ENCODE measurements at regions of chr9 and their contacts with region 1.

Region 1: GRCh38 chr9:5886114-5886939 is 4.4 kb upstream of the MLANA start:
- DNase-seq: peak; percentile 79 to 94
- H3K4me3 ChIP-seq: no peak overlapping the region
- H3K27ac ChIP-seq: no peak overlapping the region
- H3K4me1 ChIP-seq: no peaks in the 10 kb centered on the region
- H3K27me3 ChIP-seq: no peaks in the 10 kb centered on the region
- CTCF ChIP-seq: peak; percentile 95 to 98 (median 98)
- EP300 ChIP-seq: no peak
- POLR2A ChIP-seq: no peak
- RAD21 ChIP-seq: peak; percentile 96 to 97

Region 2: DNA sequence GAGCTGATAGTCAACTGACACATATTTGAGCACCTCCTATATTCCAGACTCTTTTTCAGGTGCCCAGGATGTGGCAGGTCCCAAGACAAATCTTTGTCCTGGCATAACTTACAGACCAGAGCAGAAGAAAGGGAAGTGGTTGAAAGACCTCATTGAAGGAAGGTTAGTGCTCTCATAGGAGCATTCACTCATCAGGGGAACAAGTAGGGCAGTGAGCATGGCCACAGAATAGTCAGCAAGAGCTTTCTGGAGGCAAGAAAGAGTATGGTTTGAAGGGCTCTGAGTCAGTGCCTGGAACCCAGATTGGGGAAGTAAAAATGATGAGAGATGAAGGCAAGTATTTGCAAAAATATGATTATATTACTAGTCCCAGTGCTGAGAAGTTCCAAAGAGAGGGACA is 28.4 kb before region 1 on chr9:
- CTCF ChIA-PET with region 1: interaction called, 26 read pairs
- POLR2A ChIA-PET with region 1: no interaction called
- DNase-seq: no peak
- H3K4me3 ChIP-seq: no peak overlapping the region
- H3K27ac ChIP-seq: no peak overlapping the region
- H3K4me1 ChIP-seq: no peaks in the 10 kb centered on the region
- H3K27me3 ChIP-seq: no peaks in the 10 kb centered on the region
- CTCF ChIP-seq: no peak
- EP300 ChIP-seq: no peak
- POLR2A ChIP-seq: no peak
- RAD21 ChIP-seq: no peak

Region 3: DNA sequence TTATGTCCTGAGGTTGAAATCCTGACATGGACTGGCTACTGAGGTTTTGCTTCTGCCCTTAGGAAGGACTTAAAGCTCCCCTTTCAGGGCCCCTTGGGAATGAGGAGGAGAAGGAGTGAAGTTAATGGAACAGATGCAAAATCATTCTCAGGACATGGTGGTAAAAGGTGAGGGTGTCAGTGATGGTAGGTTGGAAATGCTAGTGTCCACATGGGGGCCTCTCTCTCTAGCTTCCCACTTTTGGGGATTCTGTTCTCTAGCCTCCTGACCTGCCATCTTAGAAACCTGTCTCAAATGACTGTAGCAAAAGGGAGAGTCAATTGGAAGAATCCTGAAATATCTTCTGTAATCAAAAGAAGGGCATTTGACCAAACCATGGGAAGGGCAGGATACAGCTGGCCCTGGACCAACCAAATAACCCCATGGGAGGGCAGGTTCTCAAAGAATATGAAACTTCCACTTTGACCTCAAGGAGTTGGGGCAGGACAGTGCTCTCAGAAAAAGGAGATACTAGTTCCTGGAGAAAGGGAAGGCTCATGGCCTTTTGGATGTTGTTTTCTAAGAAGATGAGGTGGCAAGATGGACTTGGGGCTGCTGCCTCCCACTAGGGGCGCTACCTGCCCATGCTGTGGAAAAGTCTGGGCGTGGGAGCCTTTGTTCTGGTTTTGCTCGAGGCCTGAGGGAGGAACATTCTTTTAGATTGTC is 16.9 kb before region 1 on chr9:
- CTCF ChIA-PET with region 1: interaction called, 38 read pairs
- POLR2A ChIA-PET with region 1: no interaction called
- DNase-seq: peak in 1 of 2 experiments; percentile 70
- H3K4me3 ChIP-seq: no peak overlapping the region
- H3K27ac ChIP-seq: no peak overlapping the region
- H3K4me1 ChIP-seq: peaks cover 0 to 2% (median 2%) of the 10 kb centered on the region in 4 experiments; a peak in 4 of 7 replicates
- H3K27me3 ChIP-seq: no peaks in the 10 kb centered on the region
- CTCF ChIP-seq: peak; percentile 59 to 81 (median 74)
- EP300 ChIP-seq: no peak
- POLR2A ChIP-seq: no peak
- RAD21 ChIP-seq: peak; percentile 63 to 65

Region 4: DNA sequence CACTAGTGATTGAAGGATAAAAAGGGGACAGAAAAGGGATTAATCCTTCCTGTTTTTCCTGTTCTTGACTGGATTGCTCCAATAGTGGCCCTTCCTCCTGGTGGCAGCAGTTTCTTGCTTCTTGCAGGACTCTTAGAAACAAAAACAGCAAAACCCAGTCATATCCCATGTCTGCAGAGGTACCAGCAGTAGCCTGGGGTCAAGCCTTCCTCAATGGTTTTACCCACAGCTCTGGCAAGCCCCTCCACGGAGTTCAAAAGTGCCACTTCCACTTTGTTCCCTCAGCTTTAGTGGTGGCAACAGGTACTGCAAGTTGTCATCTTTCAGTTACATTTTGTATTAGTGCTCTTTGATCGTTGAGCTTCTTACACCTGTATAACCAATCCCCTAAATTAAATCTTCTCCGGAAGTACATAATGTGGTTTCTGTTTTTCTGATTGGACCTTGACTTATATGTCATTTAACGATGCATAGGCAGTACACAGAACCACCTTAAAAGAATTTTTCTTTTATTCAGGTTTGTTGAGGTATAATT is 137.8 kb after region 1 on chr9:
- CTCF ChIA-PET with region 1: interaction called, 10 read pairs
- POLR2A ChIA-PET with region 1: interaction called, 3 read pairs
- DNase-seq: peak in 1 of 2 experiments; percentile 50
- H3K4me3 ChIP-seq: no peak overlapping the region; a peak in 1 of 8 replicates
- H3K27ac ChIP-seq: no peak overlapping the region
- H3K4me1 ChIP-seq: peaks cover 0 to 2% (median 0%) of the 10 kb centered on the region in 4 experiments; a peak in 1 of 7 replicates
- H3K27me3 ChIP-seq: no peaks in the 10 kb centered on the region
- CTCF ChIP-seq: peak in 2 of 3 experiments; percentile 21 to 59; a peak in 3 of 4 replicates
- EP300 ChIP-seq: no peak
- POLR2A ChIP-seq: no peak
- RAD21 ChIP-seq: peak; percentile 0 to 3; a peak in 1 of 4 replicates

Region 5: DNA sequence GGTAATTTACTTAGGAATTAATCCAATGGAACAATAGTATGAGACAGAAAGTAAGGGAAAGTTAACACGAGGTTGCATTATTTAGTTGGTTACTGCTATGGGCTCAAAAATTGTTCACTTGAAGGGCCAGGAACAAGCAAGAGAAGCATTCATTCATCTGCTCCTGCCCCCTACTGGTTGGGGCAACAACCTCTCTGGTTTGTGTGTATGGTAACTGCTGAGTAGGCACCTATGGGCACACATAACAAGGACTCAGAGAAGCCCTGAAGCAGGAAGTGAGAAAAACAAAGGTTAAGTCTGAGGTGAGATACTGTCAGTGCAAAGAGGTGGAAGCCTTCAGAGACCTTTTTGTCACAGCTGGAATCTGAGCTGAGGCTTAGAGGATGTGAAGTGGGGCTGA is 163.5 kb after region 1 on chr9:
- CTCF ChIA-PET with region 1: interaction called, 51 read pairs
- POLR2A ChIA-PET with region 1: no interaction called
- DNase-seq: no peak
- H3K4me3 ChIP-seq: no peak overlapping the region
- H3K27ac ChIP-seq: no peak overlapping the region
- H3K4me1 ChIP-seq: 0 out of 7 replicates have a peak, but pooled peaks cover 0 to 4% (median 0%) of the 10 kb centered on the region in 4 experiments
- H3K27me3 ChIP-seq: no peaks in the 10 kb centered on the region
- CTCF ChIP-seq: peak; percentile 40 to 67 (median 41)
- EP300 ChIP-seq: no peak
- POLR2A ChIP-seq: no peak
- RAD21 ChIP-seq: peak; percentile 35 to 54; a peak in 3 of 4 replicates

Region 6: DNA sequence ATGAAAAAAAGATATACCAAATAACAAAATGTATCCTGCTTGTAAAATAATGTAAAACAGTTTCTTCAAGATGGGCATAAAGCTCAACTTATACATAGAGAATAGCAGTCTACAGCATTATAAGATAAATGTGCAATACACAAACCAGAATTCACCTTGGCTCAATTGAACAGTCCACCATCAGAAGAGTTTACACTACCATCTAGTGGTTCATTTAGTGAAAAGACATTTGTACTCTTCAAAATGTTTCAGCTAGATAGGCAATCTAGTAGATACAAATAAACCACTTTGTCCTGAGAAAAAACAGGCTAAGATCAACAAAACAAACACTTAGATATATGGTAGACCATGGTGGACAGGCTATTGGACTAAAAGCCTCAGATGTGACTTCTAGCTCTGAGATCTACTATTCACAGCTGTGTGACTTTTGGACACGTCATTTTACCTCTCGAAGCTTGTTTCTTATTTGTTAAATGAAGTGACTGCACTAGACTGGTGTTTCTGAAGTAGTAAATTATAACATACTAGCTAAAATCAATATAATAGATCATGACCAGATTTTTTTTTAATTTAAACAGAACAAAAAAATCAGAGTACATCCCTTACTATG is 419.7 kb after region 1 on chr9:
- CTCF ChIA-PET with region 1: interaction called, 12 read pairs
- POLR2A ChIA-PET with region 1: no interaction called
- DNase-seq: no peak
- H3K4me3 ChIP-seq: no peak overlapping the region
- H3K27ac ChIP-seq: no peak overlapping the region
- H3K4me1 ChIP-seq: no peaks in the 10 kb centered on the region
- H3K27me3 ChIP-seq: no peaks in the 10 kb centered on the region
- CTCF ChIP-seq: peak in 2 of 3 experiments; percentile 42 to 48; a peak in 2 of 4 replicates
- EP300 ChIP-seq: no peak
- POLR2A ChIP-seq: no peak
- RAD21 ChIP-seq: peak; percentile 82 to 85